AG04450 (cell line): ENCODE measurements at regions of chr20 and their contacts with region 1.

Region 1: DNA sequence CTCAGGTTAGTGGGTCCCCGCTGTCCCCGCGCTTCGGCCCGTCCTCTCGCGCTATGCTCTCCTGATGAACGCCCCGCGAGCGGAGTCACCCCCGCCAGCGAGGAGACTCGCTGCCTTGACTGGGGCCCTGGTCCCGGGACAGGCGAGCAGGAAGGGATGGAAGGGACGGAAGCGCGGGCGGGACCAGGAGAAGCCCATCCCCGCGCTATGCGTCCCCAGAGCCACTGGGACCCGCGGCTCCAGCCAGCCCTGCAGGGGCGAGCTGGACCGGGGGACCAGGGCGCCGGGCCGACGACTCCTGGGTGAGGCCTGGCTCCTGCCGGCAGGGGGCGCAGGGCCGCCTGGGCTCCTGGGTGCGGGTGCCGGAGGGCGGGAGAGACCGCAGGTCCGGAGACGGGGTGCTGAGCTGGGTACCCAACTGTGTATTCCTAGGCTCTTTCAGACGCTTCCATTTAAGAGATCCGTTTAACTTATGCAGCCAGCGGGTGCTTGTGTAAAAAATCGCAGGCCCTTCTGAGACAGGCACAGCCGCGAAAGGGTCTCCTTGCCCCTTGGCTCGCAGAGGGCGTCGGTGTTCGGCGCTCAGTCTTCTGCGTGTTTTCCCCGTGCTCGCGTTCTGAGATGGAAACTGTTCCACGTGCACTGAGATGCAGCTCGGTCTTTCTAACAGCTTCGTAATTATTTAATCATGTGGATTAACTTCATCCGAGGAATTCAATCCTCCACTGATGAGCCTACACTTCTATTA is 586 bp upstream of the SYCP2 start:
- DNase-seq: no peak
- H3K4me3 ChIP-seq: peak overlapping the region; percentile 60
- H3K27ac ChIP-seq: no peak overlapping the region
- H3K27me3 ChIP-seq: peaks cover 3% of the 10 kb centered on the region
- CTCF ChIP-seq: peak; percentile 86

Region 2: DNA sequence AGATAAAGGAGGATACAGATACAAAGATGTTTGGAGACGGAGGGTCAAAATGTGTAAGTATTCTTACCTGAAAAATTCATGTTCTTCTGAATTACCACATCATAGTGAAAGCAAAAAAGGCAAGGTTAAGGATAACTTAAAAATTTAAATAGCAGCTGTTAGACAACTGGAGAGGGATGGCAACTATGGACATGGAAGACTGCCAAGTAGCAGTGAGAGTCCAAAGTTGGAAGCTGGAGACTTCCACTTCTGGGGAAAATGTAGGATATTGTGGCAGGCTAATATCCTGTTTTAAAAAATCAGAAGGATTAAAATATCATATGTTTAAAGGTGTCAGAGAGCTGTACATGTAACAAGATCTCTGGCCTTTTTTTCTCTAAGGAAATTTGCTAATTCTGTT is 30.4 kb before region 1 on chr20:
- CTCF ChIA-PET with region 1: interaction called, 11 read pairs
- POLR2A ChIA-PET with region 1: no interaction called
- DNase-seq: no peak
- H3K4me3 ChIP-seq: no peak overlapping the region
- H3K27ac ChIP-seq: no peak overlapping the region
- H3K27me3 ChIP-seq: no peaks in the 10 kb centered on the region
- CTCF ChIP-seq: no peak

Region 3: DNA sequence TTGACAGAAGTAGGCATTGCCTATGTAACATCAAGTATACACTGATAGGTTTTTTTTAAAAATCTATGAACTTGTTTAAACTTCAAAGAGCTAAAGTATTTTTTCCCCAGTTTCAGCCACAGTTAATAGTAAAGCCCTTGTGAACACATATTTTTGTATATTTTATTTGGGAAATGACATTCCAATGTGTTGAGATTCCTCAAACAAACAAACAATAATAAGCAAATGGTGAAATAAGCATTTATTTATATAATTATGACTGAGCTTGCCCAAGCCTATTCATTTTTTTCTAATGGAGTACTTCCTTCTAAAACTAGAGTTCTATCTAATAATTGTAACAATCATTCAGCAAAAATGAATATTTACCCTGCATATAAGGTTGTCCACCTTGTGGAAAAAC is 13.1 kb before region 1 on chr20:
- CTCF ChIA-PET with region 1: interaction called, 18 read pairs
- POLR2A ChIA-PET with region 1: no interaction called
- DNase-seq: no peak
- H3K4me3 ChIP-seq: no peak overlapping the region
- H3K27ac ChIP-seq: no peak overlapping the region
- H3K27me3 ChIP-seq: no peaks in the 10 kb centered on the region
- CTCF ChIP-seq: no peak

Region 4: DNA sequence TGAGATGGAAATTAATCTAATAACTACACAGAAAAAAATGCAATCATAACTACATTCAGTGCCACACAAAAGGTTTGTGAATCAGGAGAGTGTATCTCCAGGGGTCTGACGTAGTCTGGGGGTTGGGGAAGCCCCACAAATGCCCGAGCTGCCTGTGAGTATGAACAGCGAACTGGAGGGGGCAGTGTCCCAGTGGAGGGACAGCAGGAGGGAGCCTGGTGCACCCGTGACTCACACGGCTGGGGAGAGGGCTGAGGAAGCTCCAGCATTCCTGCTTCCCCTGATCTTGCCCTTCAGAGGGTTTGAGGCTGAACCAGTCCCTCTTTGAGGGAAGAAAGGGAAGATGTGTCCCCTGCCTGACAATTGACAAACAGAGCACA is 103.1 kb after region 1 on chr20:
- CTCF ChIA-PET with region 1: no interaction called
- POLR2A ChIA-PET with region 1: no interaction called
- DNase-seq: no peak
- H3K4me3 ChIP-seq: no peak overlapping the region
- H3K27ac ChIP-seq: no peak overlapping the region
- H3K27me3 ChIP-seq: peaks cover 2% of the 10 kb centered on the region
- CTCF ChIP-seq: peak; percentile 49

Region 5: DNA sequence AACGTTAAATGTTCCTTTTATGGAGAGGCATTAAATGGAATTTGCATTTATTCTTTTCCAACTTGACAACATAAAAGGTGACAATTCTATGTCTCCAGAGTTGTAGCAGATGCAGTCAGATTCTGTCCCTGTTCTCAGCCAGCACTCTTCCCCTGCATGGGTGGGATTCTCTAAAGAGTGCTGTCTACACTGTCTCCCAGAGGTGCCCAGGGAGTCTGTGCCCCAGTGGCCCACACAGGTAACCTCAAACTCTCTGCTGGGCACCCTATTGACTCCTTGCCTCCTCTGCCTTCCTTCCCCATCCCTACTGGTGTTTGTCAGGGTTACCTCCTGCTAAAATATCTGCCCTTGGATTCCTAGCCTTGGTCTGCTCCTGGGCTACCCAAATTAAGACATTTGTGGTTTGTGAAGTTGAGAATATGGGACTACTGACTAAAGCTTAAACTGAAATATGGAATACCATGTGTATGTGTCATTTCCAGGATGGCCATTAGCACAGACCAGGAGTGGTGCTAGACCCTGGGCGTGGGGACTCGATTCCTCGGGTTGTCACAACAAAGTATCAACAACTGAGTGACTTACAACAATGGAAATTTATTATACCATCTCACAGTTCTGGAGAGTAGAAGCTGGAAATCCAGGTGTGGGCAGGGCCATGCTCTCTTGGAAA is 308.9 kb after region 1 on chr20:
- CTCF ChIA-PET with region 1: no interaction called
- POLR2A ChIA-PET with region 1: no interaction called
- DNase-seq: no peak
- H3K4me3 ChIP-seq: no peak overlapping the region
- H3K27ac ChIP-seq: no peak overlapping the region
- H3K27me3 ChIP-seq: no peaks in the 10 kb centered on the region
- CTCF ChIP-seq: no peak